Caco-2 (cell line): ENCODE measurements at regions of chr19 and their contacts with region 1.

Region 1: DNA sequence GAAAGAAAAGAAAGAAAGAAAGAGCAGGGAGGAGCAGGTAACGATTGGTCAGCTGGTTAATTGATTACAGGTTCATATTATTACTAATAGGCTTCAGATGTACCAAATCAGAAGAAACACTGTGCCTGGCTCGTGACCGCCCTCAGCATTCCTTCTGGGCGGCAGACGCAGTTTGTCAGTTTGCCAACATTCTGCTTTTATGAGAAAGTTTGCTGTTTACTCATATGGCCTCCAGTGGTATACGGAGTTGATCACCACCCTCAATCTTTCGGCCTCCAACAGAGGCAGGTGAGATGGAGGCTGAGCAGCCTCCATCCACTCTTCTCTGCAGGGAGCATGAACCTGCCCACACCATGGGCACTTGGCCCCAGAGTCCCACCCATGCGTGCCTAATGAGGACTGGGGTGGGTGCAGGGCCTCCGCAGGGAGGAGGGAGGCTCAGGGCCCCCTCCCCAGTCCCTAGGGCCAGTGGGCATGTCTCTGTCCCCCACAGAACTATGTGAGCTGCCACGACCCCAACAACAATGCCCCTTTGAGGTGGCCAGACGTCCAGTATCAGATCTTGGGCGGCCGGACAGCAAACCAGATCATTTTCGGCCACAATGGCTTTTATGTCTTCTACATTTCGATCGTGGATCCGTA is 8.8 kb downstream of the PRR22 start:
- DNase-seq: no peak
- H3K4me3 ChIP-seq: no peak overlapping the region
- H3K4me3 Mint-ChIP-seq: no peak overlapping the region
- H3K27ac Mint-ChIP-seq: no peak overlapping the region
- H3K4me1 ChIP-seq: no peaks in the 10 kb centered on the region
- H3K4me1 Mint-ChIP-seq: no peaks in the 10 kb centered on the region
- H3K27me3 ChIP-seq: no peaks in the 10 kb centered on the region
- H3K27me3 Mint-ChIP-seq: no peaks in the 10 kb centered on the region
- CTCF ChIP-seq: no peak

Region 2: DNA sequence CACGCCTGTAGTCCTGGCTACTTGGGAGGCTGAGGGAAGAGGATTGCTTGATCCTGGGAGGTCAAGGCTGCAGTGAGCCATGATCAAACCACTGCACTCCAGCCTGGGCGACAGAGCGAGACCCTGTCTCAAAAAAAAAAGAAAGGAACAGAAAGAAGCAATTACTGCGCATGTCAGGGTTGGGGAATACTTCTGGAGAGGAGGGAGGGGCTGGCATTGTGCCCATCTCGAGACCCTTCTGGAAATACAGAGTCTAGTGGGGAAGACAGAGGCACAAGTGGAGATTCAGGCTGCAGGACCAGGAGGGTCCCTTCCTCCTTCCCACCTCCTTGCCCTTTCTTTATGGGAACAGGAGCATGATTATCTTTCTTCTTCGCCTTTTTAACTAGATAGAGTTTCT is 22.0 kb before region 1 on chr19:
- CTCF ChIA-PET with region 1: no interaction called
- POLR2A ChIA-PET with region 1: no interaction called
- intact Hi-C with region 1: no loop called
- DNase-seq: no peak
- H3K4me3 ChIP-seq: no peak overlapping the region
- H3K4me3 Mint-ChIP-seq: no peak overlapping the region
- H3K27ac Mint-ChIP-seq: no peak overlapping the region
- H3K4me1 ChIP-seq: no peaks in the 10 kb centered on the region
- H3K4me1 Mint-ChIP-seq: no peaks in the 10 kb centered on the region
- H3K27me3 ChIP-seq: no peaks in the 10 kb centered on the region
- H3K27me3 Mint-ChIP-seq: no peaks in the 10 kb centered on the region
- CTCF ChIP-seq: no peak

Region 3: DNA sequence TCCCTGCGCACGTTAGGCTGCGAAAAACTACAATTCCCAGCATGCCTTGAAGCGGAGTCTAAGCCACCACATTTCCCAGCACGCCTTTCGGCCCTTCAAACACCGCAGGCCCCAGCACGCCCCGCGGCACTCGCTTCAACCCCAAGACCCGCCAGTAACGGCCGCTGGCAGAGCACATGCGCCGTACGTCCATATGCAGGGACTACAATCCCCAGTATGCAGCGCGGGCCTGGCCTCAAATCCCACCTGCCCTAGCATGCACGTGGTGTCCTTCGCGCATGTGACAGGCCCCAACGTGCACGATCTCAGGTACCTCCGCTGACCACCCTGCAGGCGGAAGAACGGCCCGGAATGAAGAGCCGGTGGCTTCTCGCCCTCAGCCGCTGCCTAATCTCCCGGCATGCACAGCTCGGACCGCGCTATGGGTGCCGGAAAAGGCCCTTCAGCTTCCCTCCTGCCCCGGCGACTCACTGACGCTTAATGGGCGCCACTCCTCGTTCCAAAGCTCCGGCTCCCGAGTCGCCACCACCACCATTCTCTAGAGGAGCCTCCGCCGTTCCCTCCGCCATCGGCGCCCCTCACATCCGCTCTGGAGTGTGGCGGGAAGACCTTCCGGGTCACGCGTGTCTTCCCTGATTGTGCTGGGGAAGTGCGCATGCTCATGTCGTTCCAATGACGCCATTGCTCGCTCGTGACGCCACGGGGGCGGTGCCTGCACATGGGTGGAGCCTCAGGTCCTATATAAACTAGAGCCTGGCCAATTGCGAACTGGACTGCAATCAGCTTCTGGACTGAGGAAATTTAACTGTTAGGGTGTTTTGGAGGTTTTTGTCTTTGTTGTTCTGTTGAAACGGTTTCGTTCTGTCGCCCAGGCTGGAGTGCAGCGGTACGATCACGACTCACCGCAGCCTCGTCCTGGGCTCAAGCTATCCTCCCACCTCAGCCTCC is 15.1 kb after region 1 on chr19 and contains the start of gene DUS3L:
- CTCF ChIA-PET with region 1: interaction called, 5 read pairs
- POLR2A ChIA-PET with region 1: interaction called, 4 read pairs
- intact Hi-C with region 1: loop called (anchors 1 kb)
- DNase-seq: peak; percentile 96 to 98
- H3K4me3 ChIP-seq: peak within 1 kb of the TSS; percentile 86
- H3K4me3 Mint-ChIP-seq: peak within 1 kb of the TSS; percentile 98
- H3K27ac Mint-ChIP-seq: peak within 1 kb of the TSS; percentile 100
- H3K4me1 ChIP-seq: no peaks in the 10 kb centered on the region
- H3K4me1 Mint-ChIP-seq: no peaks in the 10 kb centered on the region
- H3K27me3 ChIP-seq: no peaks in the 10 kb centered on the region
- H3K27me3 Mint-ChIP-seq: no peaks in the 10 kb centered on the region
- CTCF ChIP-seq: no peak
- total RNA-seq, gene DUS3L: 73.3 and 75.4 TPM in 2 replicates

Region 4: DNA sequence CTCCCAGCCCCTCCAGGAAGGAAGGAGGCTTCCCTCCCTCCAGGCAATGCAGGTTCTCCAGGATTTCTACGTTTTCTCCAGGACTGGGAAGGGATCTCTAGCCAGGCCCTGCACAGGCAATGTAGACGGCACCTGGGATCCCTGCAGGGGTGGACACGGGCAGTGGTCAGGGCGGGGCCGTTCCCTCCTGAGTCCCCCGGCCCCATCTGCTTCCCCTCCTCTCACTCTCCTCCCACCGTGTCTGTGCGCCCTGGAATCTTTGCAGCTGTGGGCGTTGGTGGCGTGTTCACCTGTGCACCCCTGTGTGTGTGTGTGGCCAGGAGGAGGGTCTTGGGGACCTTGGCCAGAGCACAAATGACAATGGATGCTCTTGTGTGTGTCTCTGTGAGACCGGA is 39.1 kb after region 1 on chr19:
- CTCF ChIA-PET with region 1: no interaction called
- POLR2A ChIA-PET with region 1: no interaction called
- intact Hi-C with region 1: no loop called
- DNase-seq: no peak
- H3K4me3 ChIP-seq: no peak overlapping the region
- H3K4me3 Mint-ChIP-seq: no peak overlapping the region
- H3K27ac Mint-ChIP-seq: no peak overlapping the region
- H3K4me1 ChIP-seq: no peaks in the 10 kb centered on the region
- H3K4me1 Mint-ChIP-seq: no peaks in the 10 kb centered on the region
- H3K27me3 ChIP-seq: no peaks in the 10 kb centered on the region
- H3K27me3 Mint-ChIP-seq: no peaks in the 10 kb centered on the region
- CTCF ChIP-seq: no peak

Region 5: DNA sequence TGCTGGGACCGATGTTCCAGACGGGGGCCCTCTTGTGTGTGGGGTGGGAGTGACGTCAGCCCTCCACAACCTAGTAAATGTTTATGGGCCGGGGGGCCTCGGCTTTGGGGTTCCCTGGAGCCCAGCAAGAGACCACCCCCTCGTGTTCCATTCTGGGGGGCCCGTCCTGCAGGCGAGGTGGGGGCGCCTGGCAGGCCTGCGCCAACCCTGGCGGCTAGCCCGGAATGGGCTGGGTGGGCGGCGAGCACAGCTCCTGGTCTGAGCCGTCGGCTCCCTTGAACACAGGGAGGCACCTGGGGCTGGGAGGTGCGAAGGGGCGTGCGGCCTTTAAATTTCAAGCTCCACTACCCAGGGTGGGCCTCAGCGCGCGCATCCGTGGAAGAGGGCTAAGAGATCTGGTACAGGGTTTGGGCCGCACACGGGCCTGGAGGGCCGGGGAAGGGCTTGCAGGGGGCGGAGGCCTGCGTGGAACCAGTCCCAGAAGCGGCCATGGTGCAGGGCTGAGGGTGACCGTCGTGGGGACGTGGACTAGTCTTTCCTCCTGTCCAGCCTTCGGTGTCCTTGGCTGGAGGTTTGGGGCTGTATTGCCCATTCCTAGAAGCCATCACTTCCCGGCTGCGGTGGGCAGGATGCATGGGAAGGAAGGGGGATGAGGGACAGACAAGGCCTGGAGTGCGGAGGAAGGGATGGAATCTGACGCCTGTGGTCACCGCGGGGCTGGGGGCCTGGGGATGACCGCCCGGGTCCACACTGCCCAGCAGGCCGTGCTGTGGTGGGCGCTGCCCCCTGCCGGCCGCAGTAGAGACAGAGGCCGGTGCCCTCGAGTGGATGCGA is 116.4 kb after region 1 on chr19:
- CTCF ChIA-PET with region 1: no interaction called
- POLR2A ChIA-PET with region 1: no interaction called
- intact Hi-C with region 1: loop called (anchors 1 kb)
- DNase-seq: peak in 1 of 2 experiments; percentile 64
- H3K4me3 ChIP-seq: no peak overlapping the region
- H3K4me3 Mint-ChIP-seq: no peak overlapping the region
- H3K27ac Mint-ChIP-seq: peak overlapping the region; percentile 65
- H3K4me1 ChIP-seq: peaks cover 5% of the 10 kb centered on the region; the same call in 1 of the 2 replicates
- H3K4me1 Mint-ChIP-seq: peaks cover 9% of the 10 kb centered on the region
- H3K27me3 ChIP-seq: no peaks in the 10 kb centered on the region
- H3K27me3 Mint-ChIP-seq: no peaks in the 10 kb centered on the region
- CTCF ChIP-seq: peak; percentile 74 to 86